A673 (cell line): ENCODE measurements at regions of chr2 and their contacts with region 1.

Region 1: DNA sequence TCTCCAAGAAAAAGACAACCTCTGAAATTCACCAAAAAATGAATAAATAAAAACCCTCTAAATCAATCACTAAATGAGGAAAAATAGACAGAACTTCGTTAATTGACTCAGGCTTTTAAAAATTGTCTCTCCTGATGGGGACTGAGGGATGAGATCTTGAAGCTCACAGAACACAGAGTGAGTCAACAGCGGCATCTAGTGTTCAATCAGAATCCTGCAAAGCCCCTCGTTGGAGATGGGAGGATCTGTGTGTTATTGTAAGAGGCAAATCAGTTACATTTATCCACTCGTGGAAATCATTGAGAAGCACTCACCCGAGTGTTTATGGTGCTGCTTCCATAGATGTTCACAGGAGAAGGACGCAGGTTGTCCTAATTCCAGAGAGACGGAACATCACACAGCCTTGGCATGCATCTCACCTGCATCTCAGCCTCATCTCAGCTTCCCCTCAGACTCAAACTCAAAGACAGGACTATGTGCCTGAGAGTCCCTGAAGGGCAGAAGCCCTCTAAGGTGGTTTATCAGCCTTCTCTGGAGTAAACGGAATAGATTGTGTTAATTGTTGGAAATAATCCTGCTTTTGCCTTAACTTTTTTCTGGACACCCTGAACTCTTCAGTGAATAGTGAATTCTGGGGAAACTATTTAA is 82.0 kb downstream of the MREG start:
- DNase-seq: peak; percentile 87
- H3K4me3 ChIP-seq: no peak overlapping the region
- H3K27ac ChIP-seq: peak overlapping the region; percentile 9
- H3K4me1 ChIP-seq: peaks cover 16% of the 10 kb centered on the region
- H3K27me3 ChIP-seq: no peaks in the 10 kb centered on the region
- CTCF ChIP-seq: peak; percentile 96

Region 2: GRCh38 chr2:214809751-214810564 is 1121.4 kb before region 1 on chr2:
- CTCF ChIA-PET with region 1: no interaction called
- POLR2A ChIA-PET with region 1: no interaction called
- intact Hi-C with region 1: loop called (anchors 10 kb)
- DNase-seq: peak; percentile 98
- H3K4me3 ChIP-seq: peak overlapping the region; percentile 81
- H3K27ac ChIP-seq: peak overlapping the region; percentile 96
- H3K4me1 ChIP-seq: peaks cover 21% of the 10 kb centered on the region
- H3K27me3 ChIP-seq: no peaks in the 10 kb centered on the region
- CTCF ChIP-seq: no peak

Region 3: DNA sequence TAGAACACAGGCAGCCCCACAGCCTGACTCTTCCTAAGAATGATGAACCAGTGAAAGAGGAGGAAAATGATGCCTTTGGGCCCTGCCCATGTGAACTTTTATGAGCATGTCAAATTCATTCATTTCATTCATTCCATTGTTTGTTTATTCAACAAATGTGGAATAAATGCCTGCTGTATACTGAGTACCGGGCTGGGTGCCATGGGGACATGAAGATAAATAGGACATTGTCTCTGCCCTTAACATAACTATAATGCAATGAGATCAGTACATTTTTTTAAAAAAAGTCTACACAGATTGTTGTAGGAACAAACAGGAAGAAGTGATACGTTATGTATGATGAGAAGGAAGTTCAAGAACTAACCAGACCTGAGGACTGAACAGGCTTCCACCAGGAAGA is 67.3 kb after region 1 on chr2:
- CTCF ChIA-PET with region 1: no interaction called
- POLR2A ChIA-PET with region 1: interaction called, 10 read pairs
- intact Hi-C with region 1: no loop called
- DNase-seq: no peak
- H3K4me3 ChIP-seq: no peak overlapping the region
- H3K27ac ChIP-seq: no peak overlapping the region
- H3K4me1 ChIP-seq: no peaks in the 10 kb centered on the region
- H3K27me3 ChIP-seq: no peaks in the 10 kb centered on the region
- CTCF ChIP-seq: no peak